CD8-positive, alpha-beta T cell (primary cell): ENCODE measurements at regions of chr1 and their contacts with region 1.

Region 1: GRCh38 chr1:89622895-89623294 is 10.0 kb upstream of the LRRC8C start:
- DNase-seq: peak in 2 of 9 experiments; percentile 53 to 69
- ATAC-seq: peak; percentile 53
- H3K4me3 ChIP-seq: no peak overlapping the region
- H3K4me3 Mint-ChIP-seq: no peak overlapping the region
- H3K27ac ChIP-seq: no peak overlapping the region
- H3K27ac Mint-ChIP-seq: peak overlapping the region; percentile 66
- H3K4me1 ChIP-seq: peaks cover 16% of the 10 kb centered on the region
- H3K4me1 Mint-ChIP-seq: peaks cover 56% of the 10 kb centered on the region
- H3K27me3 ChIP-seq: no peaks in the 10 kb centered on the region
- H3K27me3 Mint-ChIP-seq: no peaks in the 10 kb centered on the region
- CTCF ChIP-seq: no peak

Region 2: DNA sequence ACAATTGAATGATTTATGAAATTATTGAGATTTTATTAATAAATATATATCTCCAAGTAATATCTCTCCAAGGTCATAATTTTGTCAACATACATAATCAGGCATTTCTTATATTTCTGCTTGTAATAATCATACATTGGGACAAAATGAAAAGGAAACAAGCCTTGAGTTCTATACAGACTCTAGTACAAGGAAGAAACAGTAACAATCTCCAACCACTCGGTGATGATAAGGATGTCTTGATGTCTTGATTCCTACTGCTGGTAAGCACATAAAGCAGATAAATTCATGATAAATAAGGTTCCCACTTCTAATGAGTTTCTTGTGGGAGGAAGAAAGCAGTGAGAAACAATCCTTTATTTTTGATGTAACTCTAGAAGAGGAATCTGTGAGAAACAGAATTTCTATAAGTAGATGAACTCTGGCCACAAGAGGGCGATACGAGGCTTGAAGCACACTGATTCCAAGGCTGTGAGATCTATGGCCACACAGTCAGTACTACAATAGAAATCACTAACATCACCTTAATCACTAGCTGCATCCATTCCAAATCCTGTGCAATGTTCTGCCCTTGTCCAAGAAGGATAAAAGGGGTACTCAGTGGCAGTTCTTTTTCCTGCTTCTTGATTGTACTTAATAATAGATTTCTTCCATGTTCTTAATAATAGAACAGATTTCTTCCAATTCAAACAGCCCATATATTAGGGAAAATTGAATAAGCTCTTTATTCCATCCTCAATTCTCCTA is 139.7 kb before region 1 on chr1:
- CTCF ChIA-PET with region 1: interaction called, 28 read pairs
- POLR2A ChIA-PET with region 1: interaction called, 4 read pairs
- intact Hi-C with region 1: loop called (anchors 1 to 2 kb)
- DNase-seq: peak; percentile 48 to 85 (median 79)
- ATAC-seq: peak; percentile 92
- H3K4me3 ChIP-seq: no peak overlapping the region
- H3K4me3 Mint-ChIP-seq: no peak overlapping the region
- H3K27ac ChIP-seq: no peak overlapping the region
- H3K27ac Mint-ChIP-seq: no peak overlapping the region
- H3K4me1 ChIP-seq: no peaks in the 10 kb centered on the region
- H3K4me1 Mint-ChIP-seq: peaks cover 9% of the 10 kb centered on the region
- H3K27me3 ChIP-seq: no peaks in the 10 kb centered on the region
- H3K27me3 Mint-ChIP-seq: peaks cover 4% of the 10 kb centered on the region
- CTCF ChIP-seq: peak; percentile 72

Region 3: GRCh38 chr1:89524369-89525168 is 98.3 kb before region 1 on chr1 and contains the start of gene LRRC8B:
- CTCF ChIA-PET with region 1: interaction called, 17 read pairs
- POLR2A ChIA-PET with region 1: no interaction called
- intact Hi-C with region 1: loop called in 1 of 2 experiments (anchors 5 kb)
- DNase-seq: peak; percentile 73 to 94 (median 86)
- ATAC-seq: peak; percentile 80
- H3K4me3 ChIP-seq: peak within 1 kb of the TSS; percentile 92 to 98
- H3K4me3 Mint-ChIP-seq: no peak within 1 kb of the TSS
- H3K27ac ChIP-seq: peak within 1 kb of the TSS; percentile 81 to 91
- H3K27ac Mint-ChIP-seq: peak within 1 kb of the TSS; percentile 90
- H3K4me1 ChIP-seq: peaks cover 38% of the 10 kb centered on the region
- H3K4me1 Mint-ChIP-seq: peaks cover 25% of the 10 kb centered on the region
- H3K27me3 ChIP-seq: no peaks in the 10 kb centered on the region
- H3K27me3 Mint-ChIP-seq: no peaks in the 10 kb centered on the region
- CTCF ChIP-seq: no peak
- total RNA-seq, gene LRRC8B: 11.8 to 14.5 TPM

Region 4: DNA sequence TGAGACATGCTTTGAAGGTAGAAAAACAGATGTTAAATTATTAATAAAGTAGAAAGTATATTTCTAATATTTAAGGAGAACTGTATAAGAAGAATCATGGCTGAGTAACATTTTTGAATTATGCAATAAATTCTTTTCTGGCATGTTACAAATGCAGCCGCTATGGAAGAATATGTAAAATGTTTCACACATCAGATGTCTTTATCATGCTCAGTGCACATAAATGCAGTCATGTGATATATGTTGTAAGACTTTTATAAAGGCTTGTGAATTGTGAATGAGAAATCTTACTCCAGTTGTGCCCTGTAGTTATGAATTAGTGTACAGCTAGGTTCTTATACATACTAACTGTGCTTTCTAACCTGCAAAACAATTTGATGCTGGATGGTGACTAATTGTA is 44.7 kb before region 1 on chr1:
- CTCF ChIA-PET with region 1: interaction called, 11 read pairs
- POLR2A ChIA-PET with region 1: interaction called, 3 read pairs
- intact Hi-C with region 1: loop called in 1 of 2 experiments (anchors 1 kb)
- DNase-seq: no peak
- ATAC-seq: no peak
- H3K4me3 ChIP-seq: no peak overlapping the region
- H3K4me3 Mint-ChIP-seq: no peak overlapping the region
- H3K27ac ChIP-seq: no peak overlapping the region
- H3K27ac Mint-ChIP-seq: no peak overlapping the region
- H3K4me1 ChIP-seq: no peaks in the 10 kb centered on the region
- H3K4me1 Mint-ChIP-seq: peaks cover 7% of the 10 kb centered on the region
- H3K27me3 ChIP-seq: no peaks in the 10 kb centered on the region
- H3K27me3 Mint-ChIP-seq: no peaks in the 10 kb centered on the region
- CTCF ChIP-seq: no peak

Region 5: DNA sequence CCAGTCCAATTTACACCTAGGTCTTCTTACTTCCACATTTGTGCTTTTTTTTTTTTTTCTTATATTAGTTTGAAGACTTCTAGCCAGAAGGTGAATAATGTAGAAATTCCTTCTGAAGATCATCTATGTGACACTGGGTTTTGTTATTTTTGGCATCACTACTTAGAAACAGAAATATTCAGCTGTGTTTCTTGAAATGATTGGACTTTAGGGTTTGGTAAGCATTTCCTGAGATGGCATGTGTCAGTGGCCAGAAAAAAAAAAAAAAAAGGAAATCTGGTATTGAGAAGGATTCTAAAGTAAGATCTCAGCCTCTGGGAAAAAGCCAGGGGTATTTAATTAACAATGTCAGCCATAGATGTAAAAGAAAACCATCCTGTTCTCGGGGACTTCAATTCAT is 33.4 kb before region 1 on chr1:
- CTCF ChIA-PET with region 1: interaction called, 401 read pairs
- POLR2A ChIA-PET with region 1: no interaction called
- intact Hi-C with region 1: loop called in 1 of 2 experiments (anchors 5 kb)
- DNase-seq: no peak
- ATAC-seq: no peak
- H3K4me3 ChIP-seq: no peak overlapping the region
- H3K4me3 Mint-ChIP-seq: no peak overlapping the region
- H3K27ac ChIP-seq: no peak overlapping the region
- H3K27ac Mint-ChIP-seq: no peak overlapping the region
- H3K4me1 ChIP-seq: peaks cover 3% of the 10 kb centered on the region
- H3K4me1 Mint-ChIP-seq: peaks cover 54% of the 10 kb centered on the region
- H3K27me3 ChIP-seq: no peaks in the 10 kb centered on the region
- H3K27me3 Mint-ChIP-seq: no peaks in the 10 kb centered on the region
- CTCF ChIP-seq: no peak

Region 6: GRCh38 chr1:89598450-89599331 is 24.2 kb before region 1 on chr1:
- CTCF ChIA-PET with region 1: interaction called, 401 read pairs
- POLR2A ChIA-PET with region 1: interaction called, 285 read pairs
- intact Hi-C with region 1: loop called in 1 of 2 experiments (anchors 1 kb)
- DNase-seq: peak in 2 of 9 experiments; percentile 55 to 67
- ATAC-seq: peak; percentile 64
- H3K4me3 ChIP-seq: no peak overlapping the region
- H3K4me3 Mint-ChIP-seq: no peak overlapping the region
- H3K27ac ChIP-seq: no peak overlapping the region
- H3K27ac Mint-ChIP-seq: peak overlapping the region; percentile 66
- H3K4me1 ChIP-seq: peaks cover 49% of the 10 kb centered on the region
- H3K4me1 Mint-ChIP-seq: peaks cover 83% of the 10 kb centered on the region
- H3K27me3 ChIP-seq: no peaks in the 10 kb centered on the region
- H3K27me3 Mint-ChIP-seq: no peaks in the 10 kb centered on the region
- CTCF ChIP-seq: peak; percentile 70

Region 7: DNA sequence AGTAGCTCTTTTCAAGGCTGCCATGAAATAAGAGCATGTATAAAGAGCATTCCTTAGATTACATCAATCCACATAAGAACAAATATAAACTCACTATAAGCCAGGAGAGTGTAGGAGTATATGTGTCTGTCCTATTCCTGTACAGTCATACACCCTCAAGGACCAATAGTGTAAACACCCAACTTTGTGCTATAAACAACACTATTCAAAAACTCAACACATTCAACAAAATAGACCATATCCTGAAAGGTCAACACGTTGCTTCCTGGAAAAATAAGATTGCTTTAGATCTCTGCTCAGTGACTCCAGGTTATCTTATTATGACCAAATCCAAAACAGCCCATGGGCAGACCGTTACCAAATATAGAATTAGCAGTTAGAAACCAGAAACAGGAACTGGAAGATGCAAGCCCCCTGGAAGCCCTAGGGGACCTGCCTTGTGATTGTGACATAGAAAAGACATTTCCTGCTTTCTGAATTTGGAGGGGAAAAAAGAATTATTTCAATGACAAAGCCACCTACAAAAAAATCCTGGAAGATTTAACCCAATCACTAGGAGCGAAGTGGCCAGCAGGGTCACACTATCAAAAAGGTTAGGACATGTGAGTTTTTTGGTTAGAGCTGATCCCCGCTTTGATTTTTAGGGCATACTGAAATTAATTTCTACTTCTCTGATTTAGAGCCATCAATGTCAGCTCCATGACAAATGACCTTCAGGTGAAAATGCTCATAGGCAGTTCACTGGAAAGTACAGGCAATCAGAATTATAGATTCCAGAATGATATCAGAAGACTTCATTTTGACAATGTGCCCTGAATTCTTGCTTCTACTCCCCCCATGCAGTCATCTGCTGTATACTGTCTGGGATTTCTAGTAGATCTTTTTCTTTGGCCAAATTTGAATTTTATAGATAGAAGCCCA is 70.0 kb after region 1 on chr1:
- CTCF ChIA-PET with region 1: no interaction called
- POLR2A ChIA-PET with region 1: no interaction called
- intact Hi-C with region 1: no loop called
- DNase-seq: no peak
- ATAC-seq: no peak
- H3K4me3 ChIP-seq: no peak overlapping the region
- H3K4me3 Mint-ChIP-seq: no peak overlapping the region
- H3K27ac ChIP-seq: peak overlapping the region in 1 of 2 experiments; percentile 41
- H3K27ac Mint-ChIP-seq: peak overlapping the region; percentile 89
- H3K4me1 ChIP-seq: peaks cover 52% of the 10 kb centered on the region
- H3K4me1 Mint-ChIP-seq: peaks cover 83% of the 10 kb centered on the region
- H3K27me3 ChIP-seq: no peaks in the 10 kb centered on the region
- H3K27me3 Mint-ChIP-seq: no peaks in the 10 kb centered on the region
- CTCF ChIP-seq: no peak

Region 8: GRCh38 chr1:90534663-90535295 is 911.9 kb after region 1 on chr1:
- CTCF ChIA-PET with region 1: no interaction called
- POLR2A ChIA-PET with region 1: no interaction called
- intact Hi-C with region 1: no loop called
- DNase-seq: no peak
- ATAC-seq: no peak
- H3K4me3 ChIP-seq: no peak overlapping the region
- H3K4me3 Mint-ChIP-seq: no peak overlapping the region
- H3K27ac ChIP-seq: no peak overlapping the region
- H3K27ac Mint-ChIP-seq: no peak overlapping the region
- H3K4me1 ChIP-seq: no peaks in the 10 kb centered on the region
- H3K4me1 Mint-ChIP-seq: no peaks in the 10 kb centered on the region
- H3K27me3 ChIP-seq: no peaks in the 10 kb centered on the region
- H3K27me3 Mint-ChIP-seq: peaks cover 8% of the 10 kb centered on the region
- CTCF ChIP-seq: no peak